Heart right ventricle (tissue), 16 donors: ENCODE measurements at regions of chr1 and their contacts with region 1.

Region 1: DNA sequence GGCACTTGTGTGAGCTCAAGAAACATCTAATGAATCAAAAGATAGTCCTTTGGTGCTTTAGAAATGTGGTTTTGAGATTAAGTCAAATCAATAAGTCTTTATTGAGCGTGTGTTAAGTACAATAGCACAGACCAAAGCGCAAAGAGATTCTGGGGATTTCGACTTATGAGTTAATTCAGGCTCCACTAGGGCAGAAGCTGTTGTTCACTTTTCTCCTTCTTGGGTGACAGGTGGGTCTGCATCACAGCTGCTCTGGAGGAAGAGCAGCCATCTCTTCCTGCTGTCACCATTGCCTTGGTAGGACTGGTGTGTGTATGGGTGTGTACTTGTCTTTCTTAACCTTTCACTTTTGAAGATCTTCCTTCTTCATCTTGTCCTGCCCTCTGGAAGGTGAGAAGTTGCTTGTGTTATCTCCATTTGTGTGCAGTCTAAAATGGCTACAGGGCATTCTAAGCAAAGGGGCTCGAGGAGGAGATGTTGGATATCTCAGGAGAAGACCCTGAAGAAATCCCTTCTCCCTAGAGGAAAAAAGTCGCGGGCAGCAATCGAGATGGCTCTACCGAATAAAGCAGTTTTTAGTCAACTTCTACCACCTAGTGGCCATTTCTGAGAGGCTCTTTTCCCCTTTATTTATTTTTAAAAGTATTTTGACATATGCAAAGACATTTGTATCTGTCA is 22.9 kb upstream of the DISC1 start:
- DNase-seq: peak in 1 of 2 donors; percentile 27
- ATAC-seq: peak in 7 of 8 donors; percentile 37 to 68 (median 59)
- H3K4me3 ChIP-seq: peak overlapping the region in 9 of 10 donors; percentile 28 to 58 (median 49)
- H3K27ac ChIP-seq: peak overlapping the region in 9 of 10 donors; percentile 4 to 70 (median 36)
- H3K4me1 ChIP-seq: peaks cover 8 to 48% (median 29%) of the 10 kb centered on the region in 9 donors
- H3K27me3 ChIP-seq: no peaks in the 10 kb centered on the region
- CTCF ChIP-seq: peak; percentile 66 to 86 (median 82)

Region 2: GRCh38 chr1:231364192-231364591 is 239.5 kb before region 1 on chr1:
- intact Hi-C with region 1: loop called in 2 of 10 experiments (anchors 5 to 10 kb)
- DNase-seq: no peak
- ATAC-seq: no peak
- H3K4me3 ChIP-seq: no peak overlapping the region
- H3K27ac ChIP-seq: peak overlapping the region in 3 of 10 donors; percentile 4 to 29 (median 15)
- H3K4me1 ChIP-seq: peaks cover 0 to 41% (median 14%) of the 10 kb centered on the region in 9 donors
- H3K27me3 ChIP-seq: no peaks in the 10 kb centered on the region
- CTCF ChIP-seq: no peak

Region 3: DNA sequence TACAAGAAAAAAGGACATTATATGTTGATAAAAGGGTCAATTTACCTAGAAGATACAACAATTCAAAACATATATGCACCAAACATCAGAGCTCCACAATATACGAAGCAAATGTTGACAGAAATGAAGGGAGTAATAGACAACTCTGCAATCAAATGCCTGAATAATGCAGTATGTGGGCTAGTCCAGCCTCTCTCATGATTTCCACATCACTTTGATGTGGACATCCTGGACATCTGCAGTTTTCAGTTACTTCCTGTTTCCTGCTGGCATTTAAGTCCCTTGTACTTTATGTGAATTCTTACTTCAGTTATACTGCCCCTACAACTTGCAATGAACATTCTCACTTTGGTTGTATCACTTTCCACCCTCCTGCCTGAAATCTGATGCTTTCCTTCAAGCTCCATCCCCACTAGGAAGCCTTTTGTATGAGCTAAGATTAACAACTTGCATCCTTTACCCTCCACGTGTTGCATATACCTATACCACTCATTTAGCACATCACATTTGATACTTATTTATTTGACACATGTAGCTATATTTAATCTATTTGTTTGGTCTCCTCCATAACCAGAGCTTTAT is 59.6 kb after region 1 on chr1:
- intact Hi-C with region 1: no loop called
- DNase-seq: no peak
- ATAC-seq: peak in 2 of 8 donors; percentile 41 to 53
- H3K4me3 ChIP-seq: no peak overlapping the region
- H3K27ac ChIP-seq: no peak overlapping the region
- H3K4me1 ChIP-seq: peaks cover 0 to 31% (median 0%) of the 10 kb centered on the region in 9 donors
- H3K27me3 ChIP-seq: no peaks in the 10 kb centered on the region
- CTCF ChIP-seq: no peak

Region 4: DNA sequence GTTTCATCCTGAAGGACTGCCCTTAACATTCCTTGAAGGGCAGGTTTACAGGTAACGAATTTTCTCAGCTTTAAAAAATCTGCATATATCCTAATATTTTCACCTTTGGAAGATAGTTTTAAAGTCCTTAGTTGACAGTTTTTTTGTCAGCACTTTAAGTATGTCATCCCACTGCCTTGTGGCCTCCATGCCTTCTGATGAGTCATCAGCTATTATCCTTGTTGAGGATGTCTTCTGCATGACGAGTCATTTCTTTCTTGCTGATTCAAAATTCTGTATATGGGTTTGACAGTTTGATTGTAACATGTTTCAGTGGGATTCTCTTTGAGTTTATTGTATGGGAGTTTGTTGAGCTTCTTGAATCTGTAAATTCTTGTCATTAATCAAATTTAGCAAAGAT is 523.5 kb after region 1 on chr1:
- intact Hi-C with region 1: no loop called
- DNase-seq: no peak
- ATAC-seq: no peak
- H3K4me3 ChIP-seq: no peak overlapping the region
- H3K27ac ChIP-seq: no peak overlapping the region
- H3K4me1 ChIP-seq: no peaks in the 10 kb centered on the region
- H3K27me3 ChIP-seq: no peaks in the 10 kb centered on the region
- CTCF ChIP-seq: no peak